ENCODE measurements at regions of chr17 and their contacts with region 1.

Region 1: DNA sequence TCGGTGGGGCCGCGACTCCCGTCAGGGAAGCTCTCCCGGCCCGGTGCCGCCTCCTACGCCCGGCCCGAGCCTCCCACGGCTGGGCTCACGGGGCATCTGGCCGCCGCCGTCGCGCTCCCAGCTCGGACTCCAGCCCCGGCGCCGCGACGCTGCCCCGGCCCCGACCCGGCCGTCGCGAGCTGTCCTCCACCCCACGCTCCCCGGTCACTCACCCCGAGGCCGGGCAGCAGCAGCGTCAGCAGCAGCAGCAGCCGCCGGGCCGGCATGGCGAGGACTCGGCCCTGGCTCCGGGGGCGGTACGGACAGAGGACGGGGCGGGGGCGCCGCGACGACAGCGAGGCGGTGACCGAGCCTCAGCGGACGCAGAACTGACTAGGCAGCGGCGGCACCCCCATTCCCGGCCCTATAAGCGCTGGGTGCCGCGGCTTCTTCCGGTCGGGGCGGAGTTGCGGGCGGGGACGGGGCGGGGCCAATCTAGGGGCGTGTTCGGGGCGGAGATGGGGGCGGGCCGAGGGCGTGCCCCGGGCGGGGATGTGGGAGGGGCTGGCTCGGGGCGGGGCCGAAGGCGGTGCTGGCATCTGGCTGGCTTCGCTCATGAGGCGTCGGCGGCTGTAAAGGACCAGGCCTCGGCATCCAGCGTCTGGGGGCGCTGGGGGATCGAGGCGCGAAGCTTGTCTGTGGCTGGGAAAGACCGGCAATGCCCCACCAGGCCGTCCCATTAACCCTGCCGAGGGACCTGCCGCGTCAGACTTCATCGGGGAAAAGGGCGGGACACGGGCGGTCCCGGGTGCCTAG is at the start of gene ERN1:
- DNase-seq: peak; percentile 83 to 95 (median 92)
- ATAC-seq: peak; percentile 87 to 89
- H3K4me3 Mint-ChIP-seq: peak within 1 kb of the TSS; percentile 83 to 95 (median 92)
- H3K27ac Mint-ChIP-seq: peak within 1 kb of the TSS; percentile 82 to 97 (median 96)
- H3K4me1 Mint-ChIP-seq: peaks cover 11 to 54% (median 37%) of the 10 kb centered on the region in 4 donors
- H3K27me3 Mint-ChIP-seq: no peaks in the 10 kb centered on the region
- polyA plus RNA-seq, gene ERN1: 9.3 to 21.2 (median 11.5) TPM

Region 2: GRCh38 chr17:64051153-64051552 is 78.8 kb before region 1 on chr17:
- POLR2A ChIA-PET with region 1: interaction called, 12 read pairs
- DNase-seq: peak in 4 of 10 donors; percentile 23 to 78 (median 62)
- ATAC-seq: peak; percentile 98 to 100
- H3K4me3 Mint-ChIP-seq: peak overlapping the region; percentile 2 to 69 (median 42)
- H3K27ac Mint-ChIP-seq: peak overlapping the region; percentile 80 to 97 (median 90)
- H3K4me1 Mint-ChIP-seq: peaks cover 12 to 38% (median 28%) of the 10 kb centered on the region in 4 donors
- H3K27me3 Mint-ChIP-seq: no peaks in the 10 kb centered on the region

Region 3: DNA sequence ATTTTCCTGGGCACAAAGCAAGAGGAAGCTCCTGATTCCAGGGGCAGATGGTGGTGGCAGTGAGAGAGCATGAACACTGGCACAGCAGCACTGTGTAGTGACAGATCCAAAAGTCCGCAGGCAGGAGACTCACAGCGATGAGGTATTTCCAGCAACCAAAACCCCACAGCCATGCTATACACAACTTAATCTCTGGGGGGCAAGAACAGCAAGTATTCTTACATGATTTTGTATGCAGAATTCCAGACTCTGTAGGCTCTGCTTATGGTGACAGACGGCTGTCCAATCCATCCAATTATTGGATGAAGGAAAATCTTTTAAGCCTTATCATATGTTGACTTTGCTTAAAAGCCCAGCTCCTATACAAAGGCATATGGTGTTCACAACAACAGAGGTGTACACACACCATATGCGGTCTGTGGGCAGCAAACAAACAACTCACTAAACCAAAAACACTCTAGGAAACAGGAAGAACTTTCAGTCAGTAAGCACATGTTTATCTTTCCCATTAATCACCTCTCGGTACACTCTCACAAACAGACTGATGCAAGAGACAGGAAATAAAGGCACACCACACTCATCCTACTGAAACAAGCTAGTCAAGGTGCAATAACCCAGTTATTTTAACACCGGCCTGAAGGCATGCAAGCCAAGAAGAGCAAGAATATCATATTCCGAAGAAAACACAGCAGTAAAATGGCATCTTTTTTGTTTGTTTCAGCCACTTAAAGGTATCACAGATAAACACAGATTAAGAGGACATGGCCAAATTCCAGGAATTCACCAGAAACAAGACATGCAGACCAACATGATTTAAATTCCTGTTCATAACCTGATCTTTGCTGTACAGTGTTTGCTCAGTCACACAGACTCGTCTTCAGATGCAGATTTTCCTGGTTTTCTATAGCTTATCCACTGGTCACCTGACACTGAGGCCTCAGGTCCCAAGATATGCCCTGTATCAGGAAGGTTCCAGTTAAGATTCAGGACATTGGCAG is 47.9 kb before region 1 on chr17:
- POLR2A ChIA-PET with region 1: interaction called, 18 read pairs
- DNase-seq: peak in 3 of 10 donors; percentile 15 to 26 (median 19)
- ATAC-seq: peak; percentile 39 to 66
- H3K4me3 Mint-ChIP-seq: peak overlapping the region in 8 of 10 donors; percentile 6 to 69 (median 50)
- H3K27ac Mint-ChIP-seq: peak overlapping the region in 7 of 10 donors; percentile 4 to 85 (median 23)
- H3K4me1 Mint-ChIP-seq: peaks cover 8 to 24% (median 18%) of the 10 kb centered on the region in 4 donors
- H3K27me3 Mint-ChIP-seq: no peaks in the 10 kb centered on the region

Region 4: GRCh38 chr17:64107500-64108235 is 22.3 kb before region 1 on chr17:
- POLR2A ChIA-PET with region 1: interaction called, 14 read pairs
- DNase-seq: no peak
- ATAC-seq: no peak
- H3K4me3 Mint-ChIP-seq: peak overlapping the region in 5 of 10 donors; percentile 12 to 33 (median 20)
- H3K27ac Mint-ChIP-seq: peak overlapping the region; percentile 32 to 96 (median 82)
- H3K4me1 Mint-ChIP-seq: peaks cover 10 to 79% (median 42%) of the 10 kb centered on the region in 4 donors
- H3K27me3 Mint-ChIP-seq: no peaks in the 10 kb centered on the region